K562 (cell line): ENCODE measurements at regions of chr6 and their contacts with region 1.

Region 1: DNA sequence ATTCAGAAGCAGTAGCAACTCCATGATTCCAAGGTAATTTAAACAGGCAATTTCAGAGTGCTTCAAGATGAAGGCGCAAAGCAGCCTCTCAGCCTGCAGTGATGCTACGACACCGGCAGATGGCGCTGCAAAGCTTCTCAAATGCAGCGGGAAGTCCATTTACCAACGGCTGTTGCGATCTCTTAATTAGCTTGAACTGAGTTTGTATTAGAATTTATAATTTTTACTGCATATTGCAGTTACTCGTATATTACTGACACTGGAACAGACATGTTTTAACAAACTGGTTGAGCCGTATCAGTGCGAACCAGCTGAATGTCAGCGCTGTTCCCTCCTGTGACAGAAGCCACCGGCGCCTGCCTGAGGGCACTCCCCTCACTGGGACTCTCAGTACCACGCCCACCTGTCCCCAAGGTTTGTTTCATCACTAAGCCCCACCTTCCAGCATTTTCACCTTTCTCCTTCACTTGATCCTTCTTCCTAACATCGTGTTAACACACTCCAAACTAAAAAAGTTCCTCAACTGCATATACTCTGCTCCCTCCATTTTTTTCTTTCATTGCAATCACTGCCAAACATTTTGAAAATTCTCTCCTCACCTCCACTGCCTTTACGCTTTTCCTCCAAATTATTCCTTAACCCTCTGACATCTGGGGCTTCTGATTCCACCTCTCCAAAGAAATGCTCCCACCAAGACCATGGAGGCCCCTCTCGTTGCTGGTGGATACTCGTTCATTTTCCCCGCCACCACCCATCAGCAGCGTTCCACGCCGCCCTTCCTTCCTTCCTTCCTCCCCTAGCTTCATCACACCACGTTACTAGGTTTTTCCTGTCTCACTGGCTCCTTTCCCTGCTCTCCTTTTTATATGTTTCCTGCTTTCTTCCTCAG is 14.5 kb downstream of the GNL1 start:
- DNase-seq: peak; percentile 85 to 92 (median 90)
- ATAC-seq: peak; percentile 94
- H3K4me3 ChIP-seq: peak overlapping the region; percentile 32
- H3K27ac ChIP-seq: no peak overlapping the region
- H3K4me1 ChIP-seq: peaks cover 0 to 2% of the 10 kb centered on the region in 2 experiments; a peak in 2 of 5 replicates
- H3K27me3 ChIP-seq: no peaks in the 10 kb centered on the region
- CTCF ChIP-seq: peak; percentile 95 to 100 (median 98)
- EP300 ChIP-seq: no peak
- POLR2A ChIP-seq: peak; percentile 43
- RAD21 ChIP-seq: peak; percentile 87 to 91

Region 2: GRCh38 chr6:30489081-30490025 is 52.4 kb before region 1 on chr6 and contains the start of gene HLA-E:
- CTCF ChIA-PET with region 1: interaction called, 63 read pairs
- POLR2A ChIA-PET with region 1: interaction called, 4 read pairs
- in situ Hi-C with region 1: loop called (anchors 5 kb)
- intact Hi-C with region 1: no loop called
- DNase-seq: peak; percentile 86 to 99 (median 91)
- ATAC-seq: peak; percentile 97
- H3K4me3 ChIP-seq: peak within 1 kb of the TSS; percentile 49
- H3K27ac ChIP-seq: peak within 1 kb of the TSS; percentile 51; the same call in 2 of the 3 replicates
- H3K4me1 ChIP-seq: peaks cover 7 to 24% of the 10 kb centered on the region in 2 experiments; a peak in 4 of 5 replicates
- H3K27me3 ChIP-seq: no peaks in the 10 kb centered on the region
- CTCF ChIP-seq: peak in 1 of 3 experiments; percentile 3; a peak in 1 of 6 replicates
- EP300 ChIP-seq: peak; percentile 4; the same call in 1 of the 2 replicates
- POLR2A ChIP-seq: peak; percentile 87
- RAD21 ChIP-seq: 0 out of 4 replicates have a peak, but pooled peaks of 1 of the 2 experiments have one; percentile 7
- polyA plus RNA-seq, gene HLA-E: 3.2 to 4.0 TPM

Region 3: GRCh38 chr6:30556066-30556905 is 14.5 kb after region 1 on chr6 and contains the start of gene GNL1:
- CTCF ChIA-PET with region 1: no interaction called
- POLR2A ChIA-PET with region 1: interaction called, 85 read pairs
- in situ Hi-C with region 1: no loop called
- intact Hi-C with region 1: no loop called
- DNase-seq: peak; percentile 97 to 99 (median 98)
- ATAC-seq: peak; percentile 90
- H3K4me3 ChIP-seq: peak within 1 kb of the TSS; percentile 80
- H3K27ac ChIP-seq: peak within 1 kb of the TSS; percentile 94
- H3K4me1 ChIP-seq: peaks cover 17 to 23% of the 10 kb centered on the region in 2 experiments; a peak in 4 of 5 replicates
- H3K27me3 ChIP-seq: no peaks in the 10 kb centered on the region
- CTCF ChIP-seq: no peak
- EP300 ChIP-seq: no peak
- POLR2A ChIP-seq: peak; percentile 8
- RAD21 ChIP-seq: no peak
- polyA plus RNA-seq, gene GNL1: 0.73 to 1.3 TPM

Region 4: GRCh38 chr6:30672445-30673253 is 130.9 kb after region 1 on chr6 and contains the start of gene DHX16:
- CTCF ChIA-PET with region 1: interaction called, 7 read pairs
- POLR2A ChIA-PET with region 1: no interaction called
- in situ Hi-C with region 1: no loop called
- intact Hi-C with region 1: loop called (anchors 1 kb)
- DNase-seq: peak; percentile 85 to 99 (median 90)
- ATAC-seq: peak; percentile 89
- H3K4me3 ChIP-seq: peak within 1 kb of the TSS; percentile 83
- H3K27ac ChIP-seq: peak within 1 kb of the TSS; percentile 60
- H3K4me1 ChIP-seq: peaks cover 7 to 27% of the 10 kb centered on the region in 2 experiments
- H3K27me3 ChIP-seq: no peaks in the 10 kb centered on the region
- CTCF ChIP-seq: peak; percentile 85 to 98 (median 97)
- EP300 ChIP-seq: peak; percentile 58; the same call in 1 of the 2 replicates
- POLR2A ChIP-seq: peak; percentile 81
- RAD21 ChIP-seq: peak; percentile 76 to 77
- polyA plus RNA-seq, gene DHX16: 14.6 to 15.3 TPM

Region 5: DNA sequence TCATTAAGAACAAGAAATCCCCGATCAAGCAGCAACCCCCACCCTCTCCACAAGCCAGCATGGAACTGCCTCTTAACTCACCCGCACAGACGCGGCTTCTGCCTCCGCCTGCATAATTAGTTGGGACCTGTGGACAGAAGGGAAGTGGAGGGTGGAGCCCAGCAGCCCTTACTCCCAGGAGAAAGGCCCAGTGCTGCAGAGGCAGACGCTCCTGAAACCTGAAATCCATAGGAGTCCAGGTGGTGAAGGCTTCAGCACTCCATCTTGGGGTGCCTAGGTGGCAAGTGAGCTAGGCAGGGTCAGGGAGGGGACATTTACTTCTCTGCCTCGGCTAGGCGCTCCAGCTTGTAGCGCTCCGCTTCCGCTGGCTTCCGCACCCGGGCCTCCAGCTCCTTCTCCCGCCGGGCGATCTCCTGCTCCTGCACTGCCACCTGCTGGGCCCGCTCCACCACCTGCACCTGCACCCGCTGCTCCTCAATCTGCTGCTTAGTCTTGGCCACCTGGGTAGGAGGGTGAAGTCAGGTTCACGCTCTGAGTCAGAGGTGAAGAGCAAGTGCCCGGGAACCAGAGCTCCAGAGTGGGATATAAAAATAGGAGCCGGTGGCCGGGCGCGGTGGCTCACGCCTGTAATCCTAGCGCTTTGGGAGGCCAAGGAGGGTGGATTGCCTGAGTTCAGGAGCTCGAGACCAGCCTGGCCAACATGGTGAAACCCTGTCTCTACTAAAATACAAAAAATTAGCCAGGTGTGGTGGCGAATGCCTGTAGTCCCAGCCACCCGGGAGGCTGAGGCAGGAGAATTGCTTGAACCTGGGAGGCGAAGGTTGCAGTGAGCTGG is 189.1 kb after region 1 on chr6:
- CTCF ChIA-PET with region 1: interaction called, 3 read pairs
- POLR2A ChIA-PET with region 1: no interaction called
- in situ Hi-C with region 1: no loop called
- intact Hi-C with region 1: loop called (anchors 5 kb)
- DNase-seq: peak; percentile 79 to 86 (median 84)
- ATAC-seq: peak; percentile 90
- H3K4me3 ChIP-seq: no peak overlapping the region
- H3K27ac ChIP-seq: 0 out of 3 replicates have a peak overlapping the region, but pooled peaks have one; percentile 18
- H3K4me1 ChIP-seq: peaks cover 0 to 7% of the 10 kb centered on the region in 2 experiments; a peak in 3 of 5 replicates
- H3K27me3 ChIP-seq: no peaks in the 10 kb centered on the region
- CTCF ChIP-seq: peak; percentile 88 to 95 (median 90)
- EP300 ChIP-seq: no peak
- POLR2A ChIP-seq: no peak; the same call in 1 of the 2 replicates
- RAD21 ChIP-seq: peak; percentile 69 to 90